ENCODE measurements at regions of chr4 and their contacts with region 1.

Region 1: DNA sequence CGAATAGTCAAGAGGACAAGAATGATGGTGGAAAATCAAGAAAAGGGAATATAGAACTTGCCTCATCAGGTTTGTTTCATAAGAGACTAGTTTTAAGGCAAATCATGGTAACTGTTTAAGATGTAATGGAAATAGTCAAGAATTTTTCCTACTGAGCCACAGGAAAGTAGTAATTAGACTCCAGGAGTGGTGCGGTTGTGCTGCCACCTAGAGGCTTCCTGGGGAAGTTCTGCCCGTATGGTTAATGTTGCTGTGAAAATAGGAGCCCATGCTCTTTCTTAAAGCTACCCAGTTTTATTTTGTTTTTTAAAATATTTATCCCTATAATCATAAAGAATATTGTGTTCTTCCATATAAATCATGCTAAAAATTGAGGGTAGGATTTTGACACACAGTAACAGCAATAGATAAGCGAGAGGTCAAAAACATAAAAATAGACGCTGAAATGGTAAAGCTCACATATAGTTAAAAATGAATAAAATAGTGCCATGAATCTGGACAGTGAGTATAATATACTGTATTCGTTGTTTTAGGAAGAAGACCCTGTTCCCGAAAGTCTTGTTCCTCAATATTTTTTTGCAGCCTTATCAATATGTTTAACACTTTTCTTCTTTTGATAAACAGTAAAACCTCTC is 87.0 kb downstream of the PHOX2B start:
- ATAC-seq: peak in 7 of 8 experiments; percentile 8 to 66 (median 48)
- H3K4me3 ChIP-seq: no peak overlapping the region
- H3K27ac ChIP-seq: no peak overlapping the region
- H3K4me1 ChIP-seq: no peaks in the 10 kb centered on the region

Region 2: GRCh38 chr4:41268022-41268421 is 393.5 kb before region 1 on chr4:
- in situ Hi-C with region 1: loop called in 1 of 9 experiments (anchors 10 kb)
- ATAC-seq: peak in 5 of 8 experiments; percentile 25 to 98 (median 43)
- H3K4me3 ChIP-seq: no peak overlapping the region
- H3K27ac ChIP-seq: no peak overlapping the region
- H3K4me1 ChIP-seq: no peaks in the 10 kb centered on the region

Measured in motor neuron (in vitro differentiated cells).